Caco-2 (cell line): ENCODE measurements at regions of chr4 and their contacts with region 1.

Region 1: GRCh38 chr4:156223985-156224384 is 270.3 kb upstream of the CTSO start:
- DNase-seq: no peak
- H3K4me3 ChIP-seq: no peak overlapping the region
- H3K4me3 Mint-ChIP-seq: no peak overlapping the region
- H3K27ac Mint-ChIP-seq: no peak overlapping the region
- H3K4me1 ChIP-seq: peaks cover 5% of the 10 kb centered on the region
- H3K4me1 Mint-ChIP-seq: peaks cover 12% of the 10 kb centered on the region
- H3K27me3 ChIP-seq: no peaks in the 10 kb centered on the region
- H3K27me3 Mint-ChIP-seq: no peaks in the 10 kb centered on the region
- CTCF ChIP-seq: no peak

Region 2: GRCh38 chr4:154822775-154823174 is 1401.2 kb before region 1 on chr4:
- CTCF ChIA-PET with region 1: no interaction called
- POLR2A ChIA-PET with region 1: no interaction called
- intact Hi-C with region 1: no loop called
- DNase-seq: no peak
- H3K4me3 ChIP-seq: no peak overlapping the region
- H3K4me3 Mint-ChIP-seq: no peak overlapping the region
- H3K27ac Mint-ChIP-seq: no peak overlapping the region
- H3K4me1 ChIP-seq: no peaks in the 10 kb centered on the region
- H3K4me1 Mint-ChIP-seq: no peaks in the 10 kb centered on the region
- H3K27me3 ChIP-seq: no peaks in the 10 kb centered on the region
- H3K27me3 Mint-ChIP-seq: peaks cover under 1% of the 10 kb centered on the region
- CTCF ChIP-seq: no peak

Region 3: DNA sequence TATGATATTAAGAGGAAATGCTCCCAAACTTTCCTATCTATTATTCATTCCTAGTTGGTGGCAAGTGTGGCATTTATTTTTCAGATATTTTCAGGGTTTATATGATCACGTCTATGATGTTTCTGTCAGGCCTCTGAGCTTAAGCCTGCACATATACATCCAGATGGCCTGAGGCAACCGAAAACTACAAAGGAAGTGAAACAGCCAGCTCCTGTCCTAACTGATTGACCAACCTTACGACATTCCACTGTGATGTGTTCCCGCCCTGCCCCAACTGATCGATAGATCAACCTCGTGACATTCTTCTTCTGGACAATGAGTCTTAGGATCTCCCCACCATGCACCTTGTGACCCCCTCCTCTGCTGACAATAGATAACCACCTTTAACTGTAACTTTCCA is 202.7 kb before region 1 on chr4:
- CTCF ChIA-PET with region 1: no interaction called
- POLR2A ChIA-PET with region 1: no interaction called
- intact Hi-C with region 1: no loop called
- DNase-seq: peak in 1 of 2 experiments; percentile 2
- H3K4me3 ChIP-seq: no peak overlapping the region
- H3K4me3 Mint-ChIP-seq: no peak overlapping the region
- H3K27ac Mint-ChIP-seq: no peak overlapping the region
- H3K4me1 ChIP-seq: no peaks in the 10 kb centered on the region
- H3K4me1 Mint-ChIP-seq: no peaks in the 10 kb centered on the region
- H3K27me3 ChIP-seq: no peaks in the 10 kb centered on the region
- H3K27me3 Mint-ChIP-seq: peaks cover 2% of the 10 kb centered on the region
- CTCF ChIP-seq: no peak

Region 4: GRCh38 chr4:156132196-156132595 is 91.8 kb before region 1 on chr4:
- CTCF ChIA-PET with region 1: no interaction called
- POLR2A ChIA-PET with region 1: no interaction called
- intact Hi-C with region 1: no loop called
- DNase-seq: no peak
- H3K4me3 ChIP-seq: no peak overlapping the region
- H3K4me3 Mint-ChIP-seq: no peak overlapping the region
- H3K27ac Mint-ChIP-seq: no peak overlapping the region
- H3K4me1 ChIP-seq: no peaks in the 10 kb centered on the region
- H3K4me1 Mint-ChIP-seq: no peaks in the 10 kb centered on the region
- H3K27me3 ChIP-seq: no peaks in the 10 kb centered on the region
- H3K27me3 Mint-ChIP-seq: peaks cover 6% of the 10 kb centered on the region
- CTCF ChIP-seq: no peak

Region 5: GRCh38 chr4:156190615-156191014 is 33.4 kb before region 1 on chr4:
- CTCF ChIA-PET with region 1: no interaction called
- POLR2A ChIA-PET with region 1: no interaction called
- intact Hi-C with region 1: loop called (anchors 2 kb)
- DNase-seq: no peak
- H3K4me3 ChIP-seq: no peak overlapping the region
- H3K4me3 Mint-ChIP-seq: no peak overlapping the region
- H3K27ac Mint-ChIP-seq: no peak overlapping the region
- H3K4me1 ChIP-seq: peaks cover 11% of the 10 kb centered on the region
- H3K4me1 Mint-ChIP-seq: peaks cover 11% of the 10 kb centered on the region
- H3K27me3 ChIP-seq: no peaks in the 10 kb centered on the region
- H3K27me3 Mint-ChIP-seq: no peaks in the 10 kb centered on the region
- CTCF ChIP-seq: no peak